H1 (cell line): ENCODE measurements at regions of chr10 and their contacts with region 1.

Region 1: GRCh38 chr10:73965890-73966768 is 31.8 kb upstream of the VCL start:
- DNase-seq: peak; percentile 80 to 96
- H3K4me3 ChIP-seq: peak overlapping the region in 1 of 4 experiments; percentile 38; a peak in 2 of 8 replicates
- H3K27ac ChIP-seq: peak overlapping the region; percentile 98
- H3K4me1 ChIP-seq: peaks cover 18 to 38% (median 31%) of the 10 kb centered on the region in 4 experiments
- H3K27me3 ChIP-seq: no peaks in the 10 kb centered on the region
- CTCF ChIP-seq: no peak
- EP300 ChIP-seq: peak in 1 of 2 experiments; percentile 97; a peak in 1 of 3 replicates
- POLR2A ChIP-seq: peak; percentile 71 to 96
- RAD21 ChIP-seq: peak in 1 of 2 experiments; percentile 11; a peak in 1 of 4 replicates

Region 2: GRCh38 chr10:73886085-73886529 is 80.0 kb before region 1 on chr10:
- CTCF ChIA-PET with region 1: interaction called, 47 read pairs
- POLR2A ChIA-PET with region 1: interaction called, 15 read pairs
- DNase-seq: peak in 1 of 2 experiments; percentile 81
- H3K4me3 ChIP-seq: no peak overlapping the region
- H3K27ac ChIP-seq: no peak overlapping the region
- H3K4me1 ChIP-seq: peaks cover 1 to 9% (median 5%) of the 10 kb centered on the region in 4 experiments; a peak in 5 of 7 replicates
- H3K27me3 ChIP-seq: no peaks in the 10 kb centered on the region
- CTCF ChIP-seq: peak; percentile 85 to 96 (median 95)
- EP300 ChIP-seq: no peak
- POLR2A ChIP-seq: no peak
- RAD21 ChIP-seq: peak; percentile 97 to 99

Region 3: DNA sequence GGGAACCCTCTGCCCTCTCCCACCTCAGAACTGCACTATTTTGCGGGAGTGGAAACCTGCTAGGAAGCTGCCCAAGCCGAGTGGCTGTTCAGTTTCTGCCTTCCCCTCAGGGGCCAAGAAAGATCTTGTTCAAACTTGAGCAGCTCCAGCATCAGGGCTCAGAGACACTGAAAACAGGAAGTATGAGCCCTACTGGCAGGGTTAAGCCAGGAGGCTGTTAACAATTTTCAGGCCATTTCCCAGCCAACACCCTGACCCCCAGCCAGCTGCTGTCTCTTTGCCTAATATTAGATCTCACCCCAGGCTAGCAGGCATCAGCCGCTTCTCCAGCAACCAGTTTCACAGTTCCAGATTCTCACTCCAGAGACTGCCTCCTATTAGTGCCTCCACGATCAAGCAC is 46.0 kb before region 1 on chr10:
- CTCF ChIA-PET with region 1: interaction called, 7 read pairs
- POLR2A ChIA-PET with region 1: interaction called, 10 read pairs
- DNase-seq: no peak
- H3K4me3 ChIP-seq: no peak overlapping the region
- H3K27ac ChIP-seq: peak overlapping the region; percentile 34; the same call in 1 of the 2 replicates
- H3K4me1 ChIP-seq: peaks cover 3 to 10% (median 4%) of the 10 kb centered on the region in 4 experiments
- H3K27me3 ChIP-seq: no peaks in the 10 kb centered on the region
- CTCF ChIP-seq: no peak
- EP300 ChIP-seq: no peak
- POLR2A ChIP-seq: no peak
- RAD21 ChIP-seq: no peak

Region 4: GRCh38 chr10:73940634-73941221 is 25.4 kb before region 1 on chr10:
- CTCF ChIA-PET with region 1: interaction called, 16 read pairs
- POLR2A ChIA-PET with region 1: interaction called, 25 read pairs
- DNase-seq: peak in 1 of 2 experiments; percentile 96
- H3K4me3 ChIP-seq: 0 out of 8 replicates have a peak overlapping the region, but pooled peaks of 1 of the 4 experiments have one; percentile 19
- H3K27ac ChIP-seq: no peak overlapping the region
- H3K4me1 ChIP-seq: peaks cover 0 to 4% (median 2%) of the 10 kb centered on the region in 4 experiments; a peak in 3 of 7 replicates
- H3K27me3 ChIP-seq: 0 out of 7 replicates have a peak, but pooled peaks cover 0 to 2% (median 0%) of the 10 kb centered on the region in 4 experiments
- CTCF ChIP-seq: peak; percentile 88 to 90 (median 90)
- EP300 ChIP-seq: no peak
- POLR2A ChIP-seq: no peak; a peak in 1 of 3 replicates
- RAD21 ChIP-seq: peak; percentile 93 to 96

Region 5: DNA sequence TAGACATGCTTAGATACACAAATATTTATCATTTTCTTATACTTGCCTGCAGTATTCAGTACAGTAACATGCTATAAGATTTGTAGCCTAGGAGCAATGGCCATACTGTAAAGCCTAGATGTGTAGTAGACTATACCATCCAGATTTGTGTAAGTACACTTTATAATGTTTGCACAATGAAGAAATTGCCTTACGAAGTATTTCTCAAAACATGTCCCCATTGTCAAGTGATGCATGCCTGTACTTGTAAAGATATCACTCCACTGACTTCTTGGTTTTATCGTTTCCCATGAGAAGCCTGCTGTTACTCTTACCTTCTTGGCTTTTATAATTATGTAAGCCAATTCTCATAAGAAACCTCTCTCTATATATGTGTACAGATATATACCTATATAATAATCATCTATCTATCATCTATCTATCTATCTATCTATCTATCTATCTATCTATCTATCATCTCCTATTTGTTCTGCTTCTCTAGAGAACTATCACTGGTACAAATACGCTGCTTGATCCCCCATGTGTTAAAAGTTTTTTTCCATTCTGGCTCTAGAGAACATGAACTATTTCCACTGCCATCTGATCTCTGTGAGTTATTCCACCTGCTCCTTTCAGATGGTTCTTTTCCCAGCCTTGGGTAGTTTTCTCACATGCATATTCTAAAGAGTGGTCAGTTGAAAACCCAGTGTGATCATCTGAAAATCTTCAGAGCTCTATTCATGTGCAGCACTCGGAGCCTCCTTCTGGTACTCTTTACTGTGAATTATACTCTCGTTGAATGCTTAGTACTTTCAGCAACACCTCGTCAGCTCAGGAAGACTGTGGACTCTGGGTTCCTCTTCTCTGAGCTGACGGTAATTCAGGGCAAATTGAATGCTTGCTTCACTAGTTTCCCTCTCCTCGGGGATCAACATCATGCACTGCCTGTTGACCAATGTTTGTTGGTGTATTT is 17.2 kb after region 1 on chr10:
- CTCF ChIA-PET with region 1: interaction called, 3 read pairs
- POLR2A ChIA-PET with region 1: interaction called, 12 read pairs
- DNase-seq: no peak
- H3K4me3 ChIP-seq: no peak overlapping the region
- H3K27ac ChIP-seq: no peak overlapping the region
- H3K4me1 ChIP-seq: peaks cover 1 to 7% (median 2%) of the 10 kb centered on the region in 4 experiments; a peak in 4 of 7 replicates
- H3K27me3 ChIP-seq: no peaks in the 10 kb centered on the region
- CTCF ChIP-seq: no peak
- EP300 ChIP-seq: no peak
- POLR2A ChIP-seq: no peak
- RAD21 ChIP-seq: no peak

Region 6: DNA sequence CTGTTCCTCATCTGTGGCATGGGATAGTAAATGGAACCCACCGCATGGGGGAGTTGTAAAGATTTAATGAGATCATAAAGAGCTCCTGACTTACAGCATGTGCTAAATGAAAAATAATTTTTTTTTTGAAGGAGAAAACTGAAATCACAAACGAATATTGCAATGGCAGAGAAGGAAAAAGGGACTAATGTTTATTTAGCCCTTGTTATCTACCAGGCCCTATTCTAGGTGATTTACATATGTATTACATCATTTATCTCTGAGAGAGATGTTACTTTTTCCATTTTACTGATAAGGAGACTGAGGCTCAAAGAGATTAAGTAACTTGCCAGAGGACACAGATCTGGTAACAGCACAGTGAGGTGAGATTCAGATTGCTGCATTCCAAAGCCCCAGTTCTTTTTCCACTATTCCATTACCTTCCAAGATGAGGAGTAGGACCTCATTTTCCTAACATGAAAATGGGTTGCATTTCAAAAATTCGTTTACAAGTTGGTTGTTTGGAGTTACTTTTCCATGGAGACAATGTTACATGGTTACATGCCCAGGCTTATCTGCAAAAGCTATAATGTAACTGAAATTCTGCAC is 60.4 kb after region 1 on chr10:
- CTCF ChIA-PET with region 1: no interaction called
- POLR2A ChIA-PET with region 1: interaction called, 13 read pairs
- DNase-seq: no peak
- H3K4me3 ChIP-seq: no peak overlapping the region
- H3K27ac ChIP-seq: no peak overlapping the region
- H3K4me1 ChIP-seq: peaks cover 0 to 8% (median 2%) of the 10 kb centered on the region in 4 experiments; a peak in 5 of 7 replicates
- H3K27me3 ChIP-seq: no peaks in the 10 kb centered on the region
- CTCF ChIP-seq: no peak
- EP300 ChIP-seq: no peak
- POLR2A ChIP-seq: peak in 1 of 2 experiments; percentile 28; a peak in 1 of 3 replicates
- RAD21 ChIP-seq: no peak

Region 7: DNA sequence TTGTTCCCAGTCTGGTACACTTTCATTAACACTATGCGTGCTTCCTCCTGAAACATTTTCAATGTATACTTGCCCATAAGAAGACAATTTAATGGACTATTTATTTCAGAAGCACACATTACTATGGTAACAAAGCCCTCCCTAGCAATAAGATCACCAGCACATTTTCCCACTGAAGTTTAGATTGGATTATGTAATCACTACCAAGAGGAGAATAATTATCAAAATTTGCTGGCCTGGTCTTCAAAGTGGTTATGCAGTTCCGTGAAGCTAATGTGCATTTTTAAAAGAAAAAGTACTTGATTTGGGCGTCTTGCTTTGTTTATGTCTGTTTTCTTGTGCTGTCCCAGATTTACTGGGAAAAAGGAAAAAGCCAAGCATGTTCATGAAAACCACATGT is 122.6 kb after region 1 on chr10:
- CTCF ChIA-PET with region 1: no interaction called
- POLR2A ChIA-PET with region 1: no interaction called
- DNase-seq: no peak
- H3K4me3 ChIP-seq: no peak overlapping the region
- H3K27ac ChIP-seq: no peak overlapping the region
- H3K4me1 ChIP-seq: no peaks in the 10 kb centered on the region
- H3K27me3 ChIP-seq: no peaks in the 10 kb centered on the region
- CTCF ChIP-seq: no peak
- EP300 ChIP-seq: no peak
- POLR2A ChIP-seq: no peak
- RAD21 ChIP-seq: no peak